AG04450 (cell line): ENCODE measurements at regions of chr2 and their contacts with region 1.

Region 1: GRCh38 chr2:203453858-203454451 is 81.1 kb downstream of the RAPH1 start:
- DNase-seq: peak; percentile 24
- H3K4me3 ChIP-seq: no peak overlapping the region
- H3K27ac ChIP-seq: no peak overlapping the region
- H3K27me3 ChIP-seq: no peaks in the 10 kb centered on the region
- CTCF ChIP-seq: peak; percentile 79

Region 2: GRCh38 chr2:202790676-202791075 is 663.3 kb before region 1 on chr2:
- CTCF ChIA-PET with region 1: interaction called, 16 read pairs
- POLR2A ChIA-PET with region 1: no interaction called
- DNase-seq: no peak
- H3K4me3 ChIP-seq: no peak overlapping the region
- H3K27ac ChIP-seq: no peak overlapping the region
- H3K27me3 ChIP-seq: no peaks in the 10 kb centered on the region
- CTCF ChIP-seq: no peak

Region 3: DNA sequence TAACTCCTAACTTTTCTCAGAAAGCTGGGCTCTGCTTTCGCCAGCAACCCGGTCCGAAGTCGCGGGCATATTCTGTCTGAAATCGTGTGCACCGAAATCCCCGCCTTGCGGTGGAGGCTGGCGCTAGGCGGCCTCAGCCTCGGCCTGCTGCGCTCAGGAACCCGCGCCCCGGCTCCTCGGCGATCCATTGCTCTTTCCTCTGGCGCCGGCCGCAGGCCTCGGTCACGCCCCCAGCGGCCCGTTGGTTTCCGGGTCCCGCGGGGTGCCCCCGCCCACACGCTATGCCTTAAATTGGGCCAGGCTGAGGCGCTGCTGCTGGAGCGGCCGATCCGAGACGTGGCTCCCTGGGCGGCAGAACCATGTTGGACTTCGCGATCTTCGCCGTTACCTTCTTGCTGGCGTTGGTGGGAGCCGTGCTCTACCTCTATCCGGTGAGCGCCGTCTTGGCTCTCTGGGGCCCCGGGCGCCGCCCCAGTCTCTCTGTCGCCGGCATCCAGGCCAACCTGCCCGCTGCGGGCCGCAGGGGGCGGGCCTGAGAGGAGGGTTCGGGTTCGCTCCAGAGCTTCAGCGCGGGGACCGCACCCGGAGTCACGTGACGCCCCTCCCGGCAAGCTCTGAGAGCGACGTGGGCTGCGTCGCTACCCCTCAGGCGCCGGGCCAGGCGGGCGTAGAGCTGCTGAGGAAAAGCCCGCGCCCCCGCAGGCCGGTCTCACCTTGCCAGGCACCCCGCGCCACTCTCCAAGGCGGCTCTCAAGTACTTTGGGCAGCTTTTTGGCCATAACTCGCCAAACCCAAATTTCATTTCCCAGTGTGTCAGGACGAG is 215.0 kb before region 1 on chr2 and contains the start of gene CYP20A1:
- CTCF ChIA-PET with region 1: no interaction called
- POLR2A ChIA-PET with region 1: interaction called, 10 read pairs
- DNase-seq: peak; percentile 90
- H3K4me3 ChIP-seq: peak within 1 kb of the TSS; percentile 87
- H3K27ac ChIP-seq: peak within 1 kb of the TSS; percentile 98
- H3K27me3 ChIP-seq: no peaks in the 10 kb centered on the region
- CTCF ChIP-seq: peak; percentile 49; the same call in 1 of the 2 replicates
- polyA plus RNA-seq, gene CYP20A1: 15.0 and 17.8 TPM in 2 replicates

Region 4: DNA sequence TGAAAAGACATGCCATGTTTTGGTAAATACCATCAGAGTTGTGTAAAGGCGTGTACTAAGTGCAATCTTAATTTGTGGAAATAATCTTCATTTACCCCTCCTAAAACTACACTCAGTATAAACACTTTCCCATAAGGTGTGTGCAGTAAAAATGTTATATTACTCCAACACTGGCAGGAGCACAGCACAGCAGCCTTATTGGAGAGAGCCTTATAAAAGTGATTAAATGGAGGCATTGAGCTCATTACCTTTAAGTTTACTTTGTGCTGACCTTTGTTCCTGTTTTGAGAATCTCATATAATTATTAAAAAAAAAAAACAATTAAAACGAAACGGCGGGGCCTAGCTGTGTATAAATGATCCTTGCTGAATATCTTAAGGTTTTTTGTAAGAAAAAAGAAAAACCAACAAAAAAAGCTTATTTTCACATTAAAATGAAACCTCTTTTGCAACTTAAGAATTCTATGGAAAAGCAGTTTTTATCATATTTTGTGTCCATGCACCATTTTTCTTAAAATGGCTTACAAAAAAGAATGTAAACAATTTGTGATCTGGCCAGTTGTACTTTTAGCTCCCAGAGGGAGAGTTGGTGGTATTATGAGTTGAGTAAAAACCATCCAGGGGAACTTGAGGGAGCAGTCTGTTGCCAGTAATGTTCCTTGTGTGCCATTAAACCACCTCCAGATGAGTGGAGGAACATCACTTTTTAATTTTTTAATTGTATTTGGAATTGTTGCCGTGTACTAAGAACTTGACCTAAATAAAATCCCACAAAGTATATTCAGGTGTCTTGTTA is 22.4 kb before region 1 on chr2:
- CTCF ChIA-PET with region 1: interaction called, 16 read pairs
- POLR2A ChIA-PET with region 1: no interaction called
- DNase-seq: no peak
- H3K4me3 ChIP-seq: no peak overlapping the region
- H3K27ac ChIP-seq: no peak overlapping the region
- H3K27me3 ChIP-seq: no peaks in the 10 kb centered on the region
- CTCF ChIP-seq: no peak

Region 5: GRCh38 chr2:203470371-203470770 is 16.4 kb after region 1 on chr2:
- CTCF ChIA-PET with region 1: interaction called, 22 read pairs
- POLR2A ChIA-PET with region 1: no interaction called
- DNase-seq: no peak
- H3K4me3 ChIP-seq: no peak overlapping the region
- H3K27ac ChIP-seq: no peak overlapping the region
- H3K27me3 ChIP-seq: no peaks in the 10 kb centered on the region
- CTCF ChIP-seq: no peak

Region 6: GRCh38 chr2:203623096-203623495 is 169.1 kb after region 1 on chr2:
- CTCF ChIA-PET with region 1: no interaction called
- POLR2A ChIA-PET with region 1: no interaction called
- DNase-seq: peak; percentile 86
- H3K4me3 ChIP-seq: no peak overlapping the region
- H3K27ac ChIP-seq: peak overlapping the region; percentile 71
- H3K27me3 ChIP-seq: no peaks in the 10 kb centered on the region
- CTCF ChIP-seq: no peak

Region 7: DNA sequence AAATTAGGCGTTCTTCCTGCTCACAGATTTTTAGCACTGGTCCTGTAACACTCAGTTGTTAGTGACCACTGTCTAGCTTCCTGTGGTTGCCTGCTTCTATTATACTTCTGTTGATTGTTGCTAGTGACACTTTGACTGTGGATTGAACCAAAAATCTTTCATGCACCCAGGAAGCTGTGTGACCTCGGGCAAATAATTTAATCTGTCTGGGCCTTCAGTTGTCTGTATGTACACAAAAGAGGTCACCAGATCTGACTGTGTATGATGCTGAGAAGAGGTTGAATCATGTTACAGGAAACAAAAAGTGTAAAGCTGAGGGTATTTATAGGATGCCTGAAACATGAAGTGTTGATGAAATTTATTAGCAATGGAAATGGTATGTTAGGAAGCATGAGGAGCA is 495.3 kb after region 1 on chr2:
- CTCF ChIA-PET with region 1: no interaction called
- POLR2A ChIA-PET with region 1: no interaction called
- DNase-seq: no peak
- H3K4me3 ChIP-seq: no peak overlapping the region
- H3K27ac ChIP-seq: no peak overlapping the region
- H3K27me3 ChIP-seq: no peaks in the 10 kb centered on the region
- CTCF ChIP-seq: no peak